AG04450 (cell line): ENCODE measurements at regions of chr13 and their contacts with region 1.

Region 1: DNA sequence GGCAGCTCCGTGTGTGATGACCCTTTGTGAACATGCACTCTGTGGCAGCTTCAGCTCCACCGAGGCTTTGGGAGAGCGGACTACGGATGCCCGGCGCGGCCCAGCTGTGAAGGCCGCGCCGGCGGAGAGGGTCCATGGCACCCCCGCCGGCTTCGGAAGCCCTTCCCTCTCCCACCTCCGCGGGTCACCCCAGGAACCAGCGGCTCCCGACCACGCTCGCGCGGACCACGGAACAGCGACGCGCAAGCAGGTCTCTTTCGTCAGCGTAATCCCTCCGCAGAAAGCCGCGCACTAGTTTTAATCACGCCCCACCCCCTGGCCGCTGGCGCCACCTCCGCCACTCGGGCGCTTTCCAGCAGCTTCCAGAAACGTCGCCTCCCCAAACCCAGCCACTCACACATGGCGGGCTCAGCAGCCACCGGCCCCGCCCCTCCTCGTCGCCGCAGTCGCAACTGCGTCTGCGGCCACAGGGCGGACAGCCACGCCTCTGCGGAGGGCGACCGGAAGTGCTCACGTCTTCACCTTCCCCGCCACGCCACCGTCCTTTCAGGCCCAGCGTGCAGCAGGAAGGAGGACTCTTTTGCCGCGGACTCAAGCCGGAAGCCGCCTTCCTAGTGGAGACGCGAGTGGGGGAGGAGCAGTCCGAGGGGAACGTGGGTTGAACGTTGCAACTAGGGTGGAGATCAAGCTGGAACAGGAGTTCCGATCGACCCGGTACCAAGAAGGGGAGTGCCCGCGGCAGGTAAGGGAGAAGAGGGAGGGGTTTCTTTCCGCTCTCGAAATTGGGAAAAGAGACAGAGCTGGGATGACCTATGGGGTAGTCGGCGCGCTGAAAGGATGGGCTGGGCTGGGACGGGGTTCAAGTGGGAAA is at the start of gene USPL1:
- DNase-seq: peak; percentile 99
- H3K4me3 ChIP-seq: peak within 1 kb of the TSS; percentile 95
- H3K27ac ChIP-seq: peak within 1 kb of the TSS; percentile 99
- H3K27me3 ChIP-seq: no peaks in the 10 kb centered on the region
- CTCF ChIP-seq: peak; percentile 27; the same call in 1 of the 2 replicates
- polyA plus RNA-seq, gene USPL1: 16.7 and 24.1 TPM in 2 replicates

Region 2: DNA sequence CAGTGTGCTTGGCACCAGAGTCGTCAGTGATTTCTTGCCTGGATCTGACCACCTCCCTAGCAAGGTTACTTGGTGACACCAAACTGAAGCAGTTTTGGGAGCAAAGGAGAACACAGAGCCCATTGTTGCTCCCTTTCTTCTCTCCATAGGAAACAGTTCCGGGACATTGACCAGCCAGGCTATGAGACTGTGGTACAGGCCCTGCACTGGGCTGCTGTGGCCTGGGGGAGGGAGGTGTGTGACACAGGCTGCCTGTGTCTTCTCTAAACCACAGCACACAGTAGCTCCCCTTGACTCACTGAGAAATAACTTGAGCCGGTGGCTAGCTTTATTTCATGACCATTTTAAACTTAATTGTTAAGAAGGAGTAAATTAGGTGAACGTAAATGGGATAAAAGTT is 552.4 kb before region 1 on chr13:
- CTCF ChIA-PET with region 1: no interaction called
- POLR2A ChIA-PET with region 1: no interaction called
- DNase-seq: no peak
- H3K4me3 ChIP-seq: no peak overlapping the region
- H3K27ac ChIP-seq: no peak overlapping the region
- H3K27me3 ChIP-seq: no peaks in the 10 kb centered on the region
- CTCF ChIP-seq: no peak

Region 3: DNA sequence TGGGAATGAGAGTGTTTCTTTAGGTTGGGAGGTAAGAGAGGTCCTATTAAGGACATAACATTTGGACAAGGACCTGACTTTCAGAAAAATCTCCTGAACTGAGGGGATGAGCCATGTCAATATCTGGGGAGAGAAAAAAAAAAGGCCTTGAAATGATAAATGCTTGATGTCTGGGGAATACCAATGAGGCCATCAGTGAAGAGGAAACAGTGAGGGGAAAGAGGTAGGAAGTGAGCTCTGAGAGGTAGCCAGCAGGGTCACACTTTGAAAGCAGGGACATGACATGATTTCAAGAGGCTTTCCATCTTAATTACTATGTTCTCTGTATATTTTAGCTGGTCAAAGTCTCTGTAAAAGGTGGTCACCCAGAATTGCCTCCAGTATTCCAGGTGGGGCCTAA is 205.2 kb before region 1 on chr13:
- CTCF ChIA-PET with region 1: interaction called, 5 read pairs
- POLR2A ChIA-PET with region 1: interaction called, 12 read pairs
- DNase-seq: no peak
- H3K4me3 ChIP-seq: no peak overlapping the region
- H3K27ac ChIP-seq: no peak overlapping the region
- H3K27me3 ChIP-seq: no peaks in the 10 kb centered on the region
- CTCF ChIP-seq: no peak

Region 4: GRCh38 chr13:30465585-30466357 is 151.8 kb before region 1 on chr13 and contains the start of gene HMGB1:
- CTCF ChIA-PET with region 1: no interaction called
- POLR2A ChIA-PET with region 1: interaction called, 18 read pairs
- DNase-seq: peak; percentile 97
- H3K4me3 ChIP-seq: peak within 1 kb of the TSS; percentile 64
- H3K27ac ChIP-seq: peak within 1 kb of the TSS; percentile 84
- H3K27me3 ChIP-seq: no peaks in the 10 kb centered on the region
- CTCF ChIP-seq: no peak
- polyA plus RNA-seq, gene HMGB1: 186 and 223 TPM in 2 replicates